CD4-positive, alpha-beta memory T cell (primary cell): ENCODE measurements at regions of chr11 and their contacts with region 1.

Region 1: GRCh38 chr11:14578541-14578956 is 58.4 kb upstream of the PSMA1 start:
- DNase-seq: peak; percentile 88 to 94 (median 91)
- H3K4me3 ChIP-seq: peak overlapping the region in 1 of 2 donors; percentile 25
- H3K4me3 Mint-ChIP-seq: peak overlapping the region; percentile 18 to 76 (median 57)
- H3K27ac ChIP-seq: peak overlapping the region; percentile 70
- H3K27ac Mint-ChIP-seq: peak overlapping the region; percentile 83 to 99 (median 97)
- H3K4me1 ChIP-seq: peaks cover 44% of the 10 kb centered on the region
- H3K4me1 Mint-ChIP-seq: peaks cover 46 to 68% (median 59%) of the 10 kb centered on the region in 4 donors
- H3K27me3 ChIP-seq: no peaks in the 10 kb centered on the region
- H3K27me3 Mint-ChIP-seq: no peaks in the 10 kb centered on the region

Region 2: DNA sequence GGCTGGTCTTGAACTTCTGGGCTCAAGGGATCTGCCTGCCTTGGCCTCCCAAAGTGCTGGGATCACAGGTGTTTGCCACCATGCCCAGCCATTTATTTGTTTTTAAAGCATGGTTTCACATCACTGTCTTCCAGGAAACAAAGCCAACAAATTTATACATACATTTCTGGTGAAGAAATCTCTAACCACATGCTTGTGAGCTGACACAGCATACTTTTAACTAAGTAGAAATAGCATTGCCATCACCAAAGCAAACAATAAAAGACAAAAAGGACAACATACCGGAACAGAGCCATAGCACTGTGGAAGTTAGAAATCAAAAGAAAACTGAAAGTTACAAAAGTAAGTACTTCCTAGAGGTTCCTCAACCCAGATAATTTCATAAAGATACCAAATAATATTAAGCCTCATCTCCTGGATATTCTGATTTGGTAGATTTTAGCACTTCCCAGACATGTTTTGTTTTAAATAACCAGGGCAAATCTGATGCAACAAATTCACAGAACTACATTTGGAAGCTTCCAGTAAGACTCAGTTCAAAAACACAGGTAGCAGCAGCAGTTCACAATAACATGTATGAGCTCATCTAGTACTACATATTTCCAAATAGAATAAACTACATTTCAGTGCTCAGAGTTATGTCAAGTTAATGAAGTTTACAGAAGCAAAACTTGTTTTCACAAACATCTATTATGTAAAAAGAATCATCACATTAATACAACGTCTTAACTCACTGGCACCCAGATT is 290.2 kb before region 1 on chr11:
- CTCF ChIA-PET with region 1: no interaction called
- POLR2A ChIA-PET with region 1: no interaction called
- intact Hi-C with region 1: no loop called
- DNase-seq: peak in 2 of 5 donors; percentile 10 to 19
- H3K4me3 ChIP-seq: no peak overlapping the region
- H3K4me3 Mint-ChIP-seq: peak overlapping the region; percentile 47 to 80 (median 64)
- H3K27ac ChIP-seq: no peak overlapping the region
- H3K27ac Mint-ChIP-seq: peak overlapping the region; percentile 9 to 92 (median 87)
- H3K4me1 ChIP-seq: peaks cover 9% of the 10 kb centered on the region
- H3K4me1 Mint-ChIP-seq: peaks cover 10 to 17% (median 14%) of the 10 kb centered on the region in 4 donors
- H3K27me3 ChIP-seq: no peaks in the 10 kb centered on the region
- H3K27me3 Mint-ChIP-seq: no peaks in the 10 kb centered on the region

Region 3: DNA sequence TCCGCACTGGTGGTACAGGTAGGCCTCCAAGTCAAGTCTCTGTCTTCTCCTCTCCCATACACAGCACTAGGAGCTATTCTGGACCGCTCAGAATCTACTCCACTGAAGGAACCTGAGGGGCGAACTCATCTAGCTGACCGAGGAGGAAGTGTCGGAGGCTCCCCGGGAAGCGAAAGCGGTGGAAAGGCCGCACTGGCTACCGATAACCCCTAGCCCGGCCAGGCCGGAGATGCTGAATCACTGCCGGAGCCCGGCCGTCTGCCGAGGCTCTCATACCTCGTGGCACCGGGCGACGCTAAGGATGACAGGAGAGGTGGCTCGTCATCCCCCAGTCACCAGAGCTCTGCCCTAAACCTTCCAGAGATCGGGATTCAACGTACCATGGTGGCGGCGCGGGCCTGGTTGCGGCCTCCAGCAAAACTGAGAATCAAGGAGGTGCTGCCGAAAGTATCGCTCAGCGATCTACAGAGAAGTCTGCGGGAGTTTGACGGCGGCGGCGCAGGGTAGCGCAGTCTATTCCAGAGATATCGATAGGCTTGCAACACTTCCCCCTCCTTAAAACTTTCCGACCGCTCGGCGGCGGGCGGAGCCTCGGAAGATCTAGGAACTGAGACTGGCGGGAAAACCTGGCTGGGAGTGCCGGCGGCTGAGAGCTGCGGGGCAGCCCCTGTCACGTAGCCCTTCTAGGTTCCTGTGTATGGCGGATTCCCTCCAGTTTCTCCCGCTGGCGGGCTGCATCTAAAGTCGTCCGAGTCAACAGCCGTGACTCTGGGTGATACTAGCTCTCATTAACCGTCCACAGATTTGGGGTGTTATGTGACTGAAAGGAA is 58.4 kb before region 1 on chr11 and contains the start of gene PSMA1:
- CTCF ChIA-PET with region 1: no interaction called
- POLR2A ChIA-PET with region 1: interaction called, 11 read pairs
- intact Hi-C with region 1: loop called (anchors 1 kb)
- DNase-seq: peak; percentile 88 to 96 (median 91)
- H3K4me3 ChIP-seq: peak within 1 kb of the TSS; percentile 63 to 95
- H3K4me3 Mint-ChIP-seq: peak within 1 kb of the TSS; percentile 93 to 99 (median 98)
- H3K27ac ChIP-seq: peak within 1 kb of the TSS; percentile 99
- H3K27ac Mint-ChIP-seq: peak within 1 kb of the TSS; percentile 95 to 98 (median 98)
- H3K4me1 ChIP-seq: peaks cover 27% of the 10 kb centered on the region
- H3K4me1 Mint-ChIP-seq: peaks cover 17 to 41% (median 29%) of the 10 kb centered on the region in 4 donors
- H3K27me3 ChIP-seq: no peaks in the 10 kb centered on the region
- H3K27me3 Mint-ChIP-seq: no peaks in the 10 kb centered on the region
- total RNA-seq, gene PSMA1: 95.8 to 105 TPM

Region 4: GRCh38 chr11:14554959-14555358 is 23.6 kb before region 1 on chr11:
- CTCF ChIA-PET with region 1: interaction called, 7 read pairs
- POLR2A ChIA-PET with region 1: interaction called, 83 read pairs
- intact Hi-C with region 1: loop called (anchors 1 kb)
- DNase-seq: peak; percentile 66 to 83 (median 78)
- H3K4me3 ChIP-seq: no peak overlapping the region
- H3K4me3 Mint-ChIP-seq: peak overlapping the region in 7 of 8 donors; percentile 12 to 84 (median 50)
- H3K27ac ChIP-seq: peak overlapping the region; percentile 37
- H3K27ac Mint-ChIP-seq: peak overlapping the region; percentile 79 to 97 (median 95)
- H3K4me1 ChIP-seq: peaks cover 27% of the 10 kb centered on the region
- H3K4me1 Mint-ChIP-seq: peaks cover 21 to 44% (median 27%) of the 10 kb centered on the region in 4 donors
- H3K27me3 ChIP-seq: no peaks in the 10 kb centered on the region
- H3K27me3 Mint-ChIP-seq: peaks cover 0 to 2% of the 10 kb centered on the region in 2 donors

Region 5: DNA sequence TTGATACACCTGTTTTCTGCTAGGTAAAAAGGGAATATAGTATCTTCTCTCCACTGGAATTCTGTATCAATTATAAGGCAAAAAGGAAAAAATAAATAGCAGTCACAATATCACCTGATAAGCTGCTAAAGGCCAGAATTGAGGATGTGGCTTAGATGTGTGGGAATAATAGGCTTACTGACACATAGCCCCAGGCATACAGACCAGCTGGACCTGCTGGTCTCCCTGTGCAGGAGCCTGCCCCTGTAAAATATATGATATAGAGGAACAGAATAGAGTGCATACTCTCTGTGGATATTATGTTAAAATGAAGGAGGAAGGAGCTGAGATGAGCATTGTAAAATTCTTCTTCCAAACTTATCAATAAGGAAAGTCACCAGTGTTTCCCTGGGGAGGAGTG is 28.2 kb after region 1 on chr11:
- CTCF ChIA-PET with region 1: no interaction called
- POLR2A ChIA-PET with region 1: interaction called, 14 read pairs
- intact Hi-C with region 1: no loop called
- DNase-seq: no peak
- H3K4me3 ChIP-seq: no peak overlapping the region
- H3K4me3 Mint-ChIP-seq: peak overlapping the region in 1 of 8 donors; percentile 35
- H3K27ac ChIP-seq: no peak overlapping the region
- H3K27ac Mint-ChIP-seq: peak overlapping the region in 1 of 7 donors; percentile 19
- H3K4me1 ChIP-seq: no peaks in the 10 kb centered on the region
- H3K4me1 Mint-ChIP-seq: peaks cover 4 to 17% (median 11%) of the 10 kb centered on the region in 4 donors
- H3K27me3 ChIP-seq: no peaks in the 10 kb centered on the region
- H3K27me3 Mint-ChIP-seq: no peaks in the 10 kb centered on the region

Region 6: GRCh38 chr11:14625586-14626205 is 47.1 kb after region 1 on chr11:
- CTCF ChIA-PET with region 1: interaction called, 5 read pairs
- POLR2A ChIA-PET with region 1: interaction called, 14 read pairs
- intact Hi-C with region 1: no loop called
- DNase-seq: no peak
- H3K4me3 ChIP-seq: no peak overlapping the region
- H3K4me3 Mint-ChIP-seq: peak overlapping the region in 4 of 8 donors; percentile 40 to 59 (median 52)
- H3K27ac ChIP-seq: no peak overlapping the region
- H3K27ac Mint-ChIP-seq: peak overlapping the region in 4 of 7 donors; percentile 11 to 62 (median 51)
- H3K4me1 ChIP-seq: peaks cover 33% of the 10 kb centered on the region
- H3K4me1 Mint-ChIP-seq: peaks cover 34 to 64% (median 49%) of the 10 kb centered on the region in 4 donors
- H3K27me3 ChIP-seq: no peaks in the 10 kb centered on the region
- H3K27me3 Mint-ChIP-seq: no peaks in the 10 kb centered on the region

Region 7: DNA sequence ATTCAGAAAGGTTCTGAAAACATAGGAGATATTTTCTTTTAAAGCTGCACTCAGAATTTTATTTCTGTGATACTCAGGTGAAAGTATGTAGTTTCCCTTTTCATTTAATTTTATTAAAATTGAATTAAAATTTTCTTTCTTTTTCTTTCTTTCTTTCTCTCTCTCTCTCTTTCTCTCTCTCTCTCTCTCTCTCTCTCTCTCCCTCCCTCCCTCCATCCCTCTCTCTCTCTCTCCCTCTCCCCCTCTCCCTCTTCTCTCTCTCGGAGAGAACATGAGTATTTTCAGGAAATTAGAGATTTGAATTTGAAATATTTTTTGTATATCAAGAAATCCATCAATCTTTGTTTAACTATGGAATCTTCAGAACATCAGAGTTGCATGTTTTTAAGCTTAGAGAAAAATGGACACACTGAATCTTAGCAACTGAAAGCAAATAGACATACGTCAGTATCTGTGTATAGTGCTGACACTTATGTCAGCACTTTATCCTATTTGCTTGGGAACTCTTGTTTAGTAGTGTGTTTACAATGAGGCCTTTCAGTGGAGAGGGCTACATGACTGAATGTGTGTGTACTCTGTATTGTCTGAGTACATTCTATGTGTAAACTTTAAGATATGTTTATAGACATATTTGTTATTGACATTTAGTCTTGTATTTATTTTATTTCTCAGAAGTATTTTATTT is 109.5 kb after region 1 on chr11:
- CTCF ChIA-PET with region 1: no interaction called
- POLR2A ChIA-PET with region 1: no interaction called
- intact Hi-C with region 1: no loop called
- DNase-seq: no peak
- H3K4me3 ChIP-seq: no peak overlapping the region
- H3K4me3 Mint-ChIP-seq: peak overlapping the region in 1 of 8 donors; percentile 63
- H3K27ac ChIP-seq: no peak overlapping the region
- H3K27ac Mint-ChIP-seq: peak overlapping the region; percentile 27 to 84 (median 58)
- H3K4me1 ChIP-seq: peaks cover 13% of the 10 kb centered on the region
- H3K4me1 Mint-ChIP-seq: peaks cover 29 to 58% (median 41%) of the 10 kb centered on the region in 4 donors
- H3K27me3 ChIP-seq: no peaks in the 10 kb centered on the region
- H3K27me3 Mint-ChIP-seq: no peaks in the 10 kb centered on the region

Region 8: GRCh38 chr11:14764579-14765527 is 186.3 kb after region 1 on chr11:
- CTCF ChIA-PET with region 1: interaction called, 3 read pairs
- POLR2A ChIA-PET with region 1: interaction called, 24 read pairs
- intact Hi-C with region 1: loop called (anchors 1 kb)
- DNase-seq: peak; percentile 81 to 93 (median 90)
- H3K4me3 ChIP-seq: no peak overlapping the region
- H3K4me3 Mint-ChIP-seq: peak overlapping the region in 7 of 8 donors; percentile 44 to 81 (median 67)
- H3K27ac ChIP-seq: peak overlapping the region; percentile 53
- H3K27ac Mint-ChIP-seq: no peak overlapping the region
- H3K4me1 ChIP-seq: peaks cover 89% of the 10 kb centered on the region
- H3K4me1 Mint-ChIP-seq: peaks cover 18 to 40% (median 25%) of the 10 kb centered on the region in 4 donors
- H3K27me3 ChIP-seq: no peaks in the 10 kb centered on the region
- H3K27me3 Mint-ChIP-seq: no peaks in the 10 kb centered on the region